Activated CD4-positive, alpha-beta T cell treated with anti-CD3 and anti-CD28 coated beads, Interleukin-2, amount 10 ng/mL, durations not matched to agents 24 days and 14 days (primary cell): ENCODE measurements at regions of chr1 and their contacts with region 1.

Region 1: DNA sequence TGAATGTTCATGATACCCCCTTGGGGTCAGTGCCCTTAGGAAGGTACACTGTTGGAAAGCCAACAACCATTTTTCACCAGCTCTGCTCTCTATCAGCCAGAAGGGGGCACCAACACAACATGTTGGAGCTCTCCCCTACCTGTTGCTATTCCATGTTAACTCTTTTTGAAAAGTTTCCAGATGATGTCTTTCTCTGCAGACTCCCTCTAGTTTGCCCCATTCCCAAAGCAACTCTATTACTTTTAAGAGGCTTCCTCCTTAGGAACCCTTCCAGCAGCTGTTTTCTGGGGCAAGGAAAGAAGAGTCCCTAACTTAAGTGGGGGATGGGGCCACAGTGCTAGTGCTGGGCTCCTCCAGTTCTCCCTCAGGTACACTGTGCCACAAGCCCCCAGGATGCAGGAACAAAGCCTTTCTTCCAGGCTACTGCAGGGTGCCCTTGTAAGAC is 22.9 kb upstream of the NDC1 start:
- DNase-seq: peak; percentile 86
- H3K4me3 Mint-ChIP-seq: no peak overlapping the region
- H3K27ac Mint-ChIP-seq: no peak overlapping the region
- H3K4me1 Mint-ChIP-seq: peaks cover 5% of the 10 kb centered on the region
- H3K27me3 Mint-ChIP-seq: no peaks in the 10 kb centered on the region

Region 2: DNA sequence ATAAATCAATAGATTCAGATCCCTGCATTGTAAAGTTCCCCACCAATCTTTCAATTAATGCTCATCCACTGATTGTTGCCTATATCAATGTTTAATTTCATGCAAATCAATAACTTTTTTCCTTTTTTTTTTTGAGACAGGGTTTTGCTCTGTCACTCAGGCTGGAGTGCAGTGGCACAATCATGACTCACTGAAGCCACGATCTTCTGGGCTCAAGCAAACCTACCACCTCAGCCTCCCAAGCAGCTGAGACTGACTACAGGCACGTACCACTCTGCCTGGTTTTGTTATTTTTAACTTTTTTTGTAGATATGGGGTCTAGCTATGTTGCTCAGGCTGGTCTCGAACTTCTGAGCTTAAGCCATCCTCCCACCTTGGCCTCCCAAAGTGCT is 58.7 kb after region 1 on chr1:
- intact Hi-C with region 1: no loop called
- DNase-seq: no peak
- H3K4me3 Mint-ChIP-seq: no peak overlapping the region
- H3K27ac Mint-ChIP-seq: peak overlapping the region; percentile 84
- H3K4me1 Mint-ChIP-seq: peaks cover 36% of the 10 kb centered on the region
- H3K27me3 Mint-ChIP-seq: no peaks in the 10 kb centered on the region

Region 3: DNA sequence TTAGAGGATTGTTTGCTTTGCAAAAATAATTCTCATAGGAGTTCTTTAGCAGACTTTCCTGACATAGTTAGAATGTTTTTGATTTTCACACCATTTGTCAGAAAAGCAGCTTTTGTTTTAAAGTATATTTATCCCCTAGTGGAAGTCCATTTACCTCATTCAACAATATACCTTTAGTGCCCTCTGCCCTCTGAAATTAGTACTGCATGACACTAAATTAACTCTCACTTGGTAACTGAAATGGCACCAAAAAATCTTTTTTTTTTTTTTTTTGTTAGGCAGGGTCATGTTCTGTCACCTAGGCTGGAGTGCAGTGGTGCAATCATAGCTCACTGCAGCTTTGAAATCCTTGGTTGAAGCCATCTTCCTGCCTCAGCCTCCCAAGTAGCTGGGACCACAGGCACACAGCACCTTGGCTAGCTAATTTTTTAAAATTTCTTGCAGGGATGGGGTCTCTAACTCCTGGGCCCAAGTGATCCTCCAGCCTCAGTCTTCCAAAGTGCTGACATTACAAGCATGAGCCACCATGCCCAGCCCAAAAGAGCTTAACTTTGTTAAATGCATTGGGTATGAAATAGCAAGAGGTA is 98.8 kb after region 1 on chr1:
- intact Hi-C with region 1: loop called (anchors 1 kb)
- DNase-seq: peak; percentile 80
- H3K4me3 Mint-ChIP-seq: no peak overlapping the region
- H3K27ac Mint-ChIP-seq: no peak overlapping the region
- H3K4me1 Mint-ChIP-seq: peaks cover 14% of the 10 kb centered on the region
- H3K27me3 Mint-ChIP-seq: no peaks in the 10 kb centered on the region

Region 4: DNA sequence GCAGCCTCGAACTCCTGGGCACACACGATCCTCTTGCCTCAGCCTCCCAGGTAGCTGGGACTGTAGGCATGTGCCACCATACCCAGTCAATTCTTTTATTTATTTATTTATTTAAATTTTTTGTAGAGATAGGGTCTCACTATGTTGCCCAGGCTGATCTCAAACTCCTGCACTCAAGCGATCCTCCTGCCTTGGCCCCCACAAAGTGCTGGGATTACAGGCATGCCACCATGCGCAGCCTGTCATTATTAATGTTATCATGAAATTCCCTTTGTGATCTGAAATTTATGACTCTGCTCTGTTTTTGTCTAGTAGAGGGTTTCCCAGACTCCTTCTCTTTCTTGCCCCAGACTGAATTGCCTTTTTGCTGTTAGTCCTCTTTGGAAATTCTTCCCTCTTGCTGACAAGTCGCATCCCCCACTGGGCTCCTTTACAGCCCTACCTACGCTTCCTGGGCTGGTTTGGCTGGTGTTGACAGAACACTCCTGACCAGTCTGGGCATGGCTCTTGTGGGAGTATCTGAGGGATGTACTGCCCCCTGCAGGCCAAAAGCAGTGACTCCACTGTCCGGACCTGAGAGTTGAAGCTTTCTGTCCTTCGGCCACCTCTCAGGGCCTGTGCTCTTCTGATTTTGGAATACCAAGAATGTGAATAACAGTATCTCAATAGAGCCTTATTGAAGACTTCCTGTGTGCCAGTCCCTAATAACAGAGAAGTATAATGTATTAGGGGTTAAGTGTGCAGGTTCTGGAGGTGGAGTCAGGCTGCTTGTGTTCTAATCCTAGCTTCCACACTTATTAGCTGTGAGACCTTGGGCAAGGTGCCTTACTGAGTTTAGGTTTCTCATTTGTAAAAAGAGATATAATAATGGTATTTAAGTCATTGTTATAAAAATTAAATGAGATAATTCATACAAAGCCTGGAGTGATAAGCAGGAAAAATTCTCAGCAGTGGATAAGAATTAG is 220.6 kb after region 1 on chr1:
- intact Hi-C with region 1: loop called (anchors 2 kb)
- DNase-seq: peak; percentile 87
- H3K4me3 Mint-ChIP-seq: no peak overlapping the region
- H3K27ac Mint-ChIP-seq: no peak overlapping the region
- H3K4me1 Mint-ChIP-seq: peaks cover 14% of the 10 kb centered on the region
- H3K27me3 Mint-ChIP-seq: no peaks in the 10 kb centered on the region